Right ventricle myocardium inferior (tissue), 1 donor: ENCODE measurements at regions of chr11 and their contacts with region 1.

Region 1: DNA sequence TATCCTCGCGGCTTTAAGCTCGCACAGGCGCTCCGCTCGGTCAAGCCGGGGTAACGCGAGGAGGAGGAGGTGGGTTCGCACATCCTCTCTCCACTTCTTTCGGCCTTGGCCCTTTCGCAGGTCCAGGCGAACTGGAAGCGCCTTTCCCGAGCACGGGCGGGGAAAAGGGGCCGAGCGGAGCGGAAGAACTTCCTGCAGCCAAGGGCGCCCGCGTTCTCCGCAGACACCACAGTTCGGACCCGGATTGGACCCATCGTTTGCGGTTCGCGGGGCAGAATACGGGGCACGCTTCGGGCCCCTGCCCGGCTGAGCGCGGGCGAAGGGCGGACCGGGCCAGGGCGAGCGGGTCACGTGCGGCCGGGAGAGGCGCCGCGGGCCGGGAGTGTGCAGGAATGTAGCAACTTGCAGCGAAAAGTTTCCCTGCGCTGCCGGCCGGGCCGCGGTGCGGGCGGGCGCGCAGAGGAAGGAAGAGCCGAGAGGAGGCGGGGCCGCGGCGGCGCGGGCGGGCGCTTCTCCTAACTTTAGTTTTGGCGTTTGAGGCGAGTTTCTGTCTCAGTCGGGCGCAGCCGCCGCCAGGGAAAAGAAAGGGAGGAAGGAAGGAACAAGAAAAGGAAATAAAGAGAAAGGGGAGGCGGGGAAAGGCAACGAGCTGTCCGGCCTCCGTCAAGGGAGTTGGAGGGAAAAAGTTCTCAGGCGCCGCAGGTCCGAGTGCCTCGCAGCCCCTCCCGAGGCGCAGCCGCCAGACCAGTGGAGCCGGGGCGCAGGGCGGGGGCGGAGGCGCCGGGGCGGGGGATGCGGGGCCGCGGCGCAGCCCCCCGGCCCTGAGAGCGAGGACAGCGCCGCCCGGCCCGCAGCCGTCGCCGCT is at the start of gene YAP1:
- DNase-seq: peak; percentile 94
- ATAC-seq: peak; percentile 94
- total RNA-seq, gene YAP1: 92.9 TPM

Region 2: GRCh38 chr11:101914738-101915426 is 195.2 kb before region 1 on chr11 and contains the start of gene CEP126:
- intact Hi-C with region 1: loop called (anchors 5 kb)
- DNase-seq: peak; percentile 95
- ATAC-seq: peak; percentile 98
- total RNA-seq, gene CEP126: 1.1 TPM

Region 3: DNA sequence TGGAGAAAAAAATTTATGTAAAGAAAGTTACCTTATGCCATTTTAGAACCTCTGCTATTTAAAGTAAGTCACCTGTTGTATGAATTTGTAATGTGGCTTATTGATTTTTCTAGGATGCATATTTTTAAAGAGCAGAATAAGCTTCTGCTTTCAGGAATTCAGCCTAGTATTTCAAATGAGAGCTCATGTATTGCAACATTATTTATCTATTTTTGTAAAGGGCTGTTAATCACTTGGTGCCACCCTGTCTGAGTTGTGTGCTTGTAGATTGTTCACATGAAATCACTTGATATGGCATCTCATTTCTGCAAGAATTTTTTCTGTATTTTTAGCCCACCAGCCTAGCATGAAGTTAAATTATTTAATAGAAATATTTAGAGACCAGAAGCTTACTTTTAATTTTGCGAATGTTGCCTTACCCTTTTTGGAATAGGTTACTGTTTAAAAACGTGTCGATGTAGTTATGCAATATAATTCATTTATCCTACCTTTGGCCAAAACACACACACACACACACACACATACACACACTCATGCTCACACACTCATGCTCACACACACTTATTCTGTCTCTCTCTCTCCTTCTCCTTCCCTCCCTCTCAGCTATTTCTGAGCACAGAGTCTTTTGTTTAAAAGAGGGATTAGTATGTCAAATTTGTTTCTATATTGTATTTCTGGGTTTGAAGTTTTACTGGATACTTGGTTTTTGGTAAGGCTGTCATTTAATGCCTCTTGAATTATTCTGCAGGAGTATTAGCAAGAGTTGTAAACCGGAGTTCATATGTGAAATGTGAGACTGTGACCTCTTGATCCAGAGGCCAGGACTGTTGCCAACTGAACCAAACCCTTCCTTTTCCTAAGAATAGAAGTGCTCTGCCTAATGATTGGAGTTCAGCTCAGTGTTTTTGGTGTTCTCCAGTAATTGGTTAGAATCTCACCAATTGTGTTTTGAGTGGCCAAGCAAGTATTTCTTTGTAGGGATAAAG is 34.5 kb after region 1 on chr11:
- intact Hi-C with region 1: loop called (anchors 2 kb)
- DNase-seq: no peak
- ATAC-seq: peak; percentile 67

Region 4: GRCh38 chr11:102216433-102217075 is 106.4 kb after region 1 on chr11:
- intact Hi-C with region 1: loop called (anchors 5 kb)
- DNase-seq: no peak
- ATAC-seq: peak; percentile 42

Region 5: DNA sequence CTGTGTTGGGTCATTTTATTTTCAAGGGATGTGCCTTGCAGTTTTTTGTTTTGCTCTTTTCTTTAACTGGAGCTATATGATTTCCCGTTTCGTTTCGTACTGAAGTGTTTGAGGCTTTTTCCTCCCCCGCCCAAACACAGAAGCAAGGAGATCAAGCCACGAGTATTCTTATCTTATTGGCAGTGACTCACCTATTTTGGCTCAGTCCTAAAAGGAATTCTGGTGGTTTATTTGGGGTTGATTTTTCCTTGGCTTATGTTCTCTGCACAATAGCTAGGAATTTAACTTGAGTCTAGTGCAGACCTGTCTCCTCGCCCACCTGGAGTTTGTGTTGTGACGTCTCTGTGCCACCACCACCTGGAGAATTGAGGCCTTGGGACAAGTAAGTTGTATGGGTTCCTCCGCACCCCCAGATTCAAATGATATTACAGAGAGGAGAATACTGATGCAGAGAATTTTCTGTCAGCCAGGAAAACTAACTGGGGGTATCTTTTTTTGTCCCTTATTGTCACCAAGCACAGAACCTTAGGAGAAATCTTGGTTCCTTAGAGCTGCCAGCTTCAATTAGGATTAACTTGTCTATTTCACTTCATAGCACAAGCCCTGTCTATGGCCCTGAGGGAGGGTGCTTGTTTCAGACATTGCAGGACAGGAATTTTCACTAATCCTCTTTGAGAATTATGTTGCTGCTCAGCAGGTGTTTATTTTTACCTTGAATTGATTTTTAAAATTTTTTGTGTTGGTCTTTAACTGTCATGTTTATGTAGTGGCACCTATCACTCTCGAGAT is 116.8 kb after region 1 on chr11:
- intact Hi-C with region 1: no loop called
- DNase-seq: no peak
- ATAC-seq: no peak

Region 6: DNA sequence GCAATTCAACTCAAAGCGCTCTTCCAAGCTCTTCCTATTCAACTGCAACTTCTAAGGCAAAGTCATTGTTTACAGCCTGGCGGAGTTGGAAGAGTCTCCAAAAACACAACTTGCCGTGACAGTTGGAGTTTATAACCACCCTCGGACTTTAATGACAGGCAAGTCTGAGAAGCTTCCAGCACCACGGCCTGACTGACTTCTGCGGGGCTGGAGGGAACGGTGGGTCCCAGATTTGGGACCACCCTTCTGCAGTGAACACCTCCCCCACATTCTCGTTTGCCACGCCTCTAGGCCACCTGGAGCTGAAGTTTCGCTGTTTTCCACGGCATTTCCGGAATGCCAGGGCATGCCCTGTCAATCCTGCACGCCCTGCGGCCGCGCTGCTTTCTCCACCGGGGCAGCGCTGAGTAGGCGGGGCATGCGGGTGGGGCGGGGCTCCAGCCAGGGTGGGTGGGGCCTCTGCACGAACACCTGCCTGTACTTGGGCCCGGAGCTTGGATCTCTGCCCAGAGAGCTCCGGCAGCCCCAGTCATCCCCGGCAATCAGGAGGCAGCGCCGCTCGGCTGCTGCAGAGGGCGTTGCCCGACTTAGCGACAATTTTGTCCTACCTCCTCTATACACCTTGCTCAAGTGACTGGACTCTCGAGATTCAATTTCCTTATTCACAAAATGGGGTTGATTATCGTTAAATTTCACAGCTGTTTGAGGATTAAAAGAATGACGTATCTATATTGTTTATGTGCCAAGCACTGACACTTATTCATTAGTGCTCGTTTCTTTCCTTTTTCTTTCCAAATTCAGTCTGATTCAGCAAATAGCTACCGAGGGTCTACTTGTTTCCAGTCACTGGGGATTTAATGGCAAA is 158.4 kb after region 1 on chr11:
- intact Hi-C with region 1: loop called (anchors 5 kb)
- DNase-seq: peak; percentile 87
- ATAC-seq: peak; percentile 94